Right ventricle myocardium superior (tissue), 1 donor: ENCODE measurements at regions of chr10 and their contacts with region 1.

Region 1: GRCh38 chr10:95246579-95247051 is 44.2 kb downstream of the PDLIM1 start:
- DNase-seq: peak; percentile 76
- ATAC-seq: peak; percentile 59

Region 2: DNA sequence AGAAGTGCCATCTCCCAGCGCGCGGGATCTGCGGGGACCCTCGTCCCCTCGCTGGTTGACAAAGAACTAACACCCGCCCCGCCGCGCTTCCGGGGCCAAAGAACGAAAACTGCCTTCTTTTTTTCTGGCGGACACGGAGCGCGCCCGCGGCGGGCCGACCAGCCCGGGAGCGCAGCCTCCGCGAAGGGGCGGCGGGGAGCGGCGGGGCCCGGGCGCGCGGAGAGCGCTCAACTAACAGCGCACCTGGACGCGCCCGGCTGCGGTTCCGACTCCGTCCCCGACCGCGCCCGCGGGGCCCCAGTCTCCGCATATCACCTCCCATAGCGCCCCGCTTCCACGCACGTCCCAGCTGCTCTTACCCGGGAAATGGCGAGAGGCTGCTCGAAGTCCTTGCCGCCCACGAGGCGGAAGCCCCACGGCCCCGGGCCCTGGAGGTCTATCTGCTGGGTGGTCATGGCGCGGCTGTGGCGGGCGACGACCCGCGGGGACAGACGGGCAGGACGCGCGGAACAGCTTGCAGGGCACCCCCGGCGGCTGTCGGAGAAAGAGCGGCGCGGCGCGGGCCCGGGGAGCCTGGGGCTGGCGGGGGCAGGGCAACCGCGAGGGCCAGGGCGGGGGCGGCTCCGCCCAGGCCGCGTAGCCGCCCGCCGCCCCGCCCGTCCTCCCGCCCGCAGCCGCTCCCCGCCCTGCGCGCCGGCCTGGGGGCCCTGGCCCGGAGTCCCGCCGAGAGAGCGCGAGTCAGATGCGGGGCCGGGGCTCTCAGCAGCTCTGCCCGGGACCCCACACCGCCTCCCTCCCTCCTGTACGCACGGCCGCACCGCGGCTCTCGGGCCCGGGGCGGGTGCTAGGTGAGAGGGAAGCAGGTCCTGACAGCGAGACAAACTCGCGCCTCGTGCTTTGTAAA is 44.1 kb after region 1 on chr10 and contains the start of gene PDLIM1:
- intact Hi-C with region 1: loop called (anchors 5 kb)
- DNase-seq: peak; percentile 89
- ATAC-seq: peak; percentile 85
- total RNA-seq, gene PDLIM1: 226 TPM

Region 3: GRCh38 chr10:95363303-95363912 is 116.8 kb after region 1 on chr10:
- intact Hi-C with region 1: loop called (anchors 5 kb)
- DNase-seq: no peak
- ATAC-seq: peak; percentile 54